ENCODE measurements at regions of chr11 and their contacts with region 1.

Region 1: DNA sequence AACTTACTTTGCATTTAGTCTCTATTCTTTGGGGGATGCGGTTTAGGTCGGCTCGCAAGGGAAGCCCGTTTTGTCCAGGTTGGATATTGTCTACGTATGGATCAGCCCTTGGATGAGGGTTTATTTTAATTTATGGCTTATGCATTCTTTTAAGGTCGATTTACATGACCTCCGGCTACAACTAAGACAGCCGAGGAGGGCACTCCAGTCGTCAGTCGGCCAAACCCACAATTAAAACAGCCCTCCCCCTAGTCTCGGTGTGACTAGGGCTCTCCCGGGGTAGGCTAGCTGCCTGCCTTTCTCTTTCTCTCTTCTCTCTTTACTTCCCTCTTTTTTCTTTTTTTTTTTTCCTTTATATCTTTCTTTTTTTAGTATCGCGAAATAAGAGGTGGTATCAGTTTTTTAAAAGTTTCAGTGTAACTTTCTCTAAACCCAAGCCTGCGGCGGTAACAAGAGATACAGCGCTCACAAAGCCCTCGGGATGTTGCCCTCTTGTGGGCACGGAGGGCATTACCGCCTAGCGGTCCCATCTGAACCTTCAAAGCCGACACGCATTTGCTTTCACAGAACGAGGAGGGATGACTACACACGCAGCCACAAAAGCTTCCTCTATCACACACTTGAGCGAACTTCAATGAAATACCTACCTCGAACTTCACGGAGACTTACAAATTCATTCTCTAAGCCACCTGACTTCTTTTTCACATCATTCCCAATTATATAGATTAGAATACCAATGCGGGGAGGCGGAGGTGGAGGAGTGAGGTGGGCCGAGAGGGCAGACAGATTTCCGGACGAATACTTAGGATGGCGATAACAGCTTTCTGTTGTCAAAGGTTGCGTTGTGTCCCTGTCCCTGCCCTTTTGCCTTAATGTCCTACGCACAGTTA is 132.3 kb upstream of the C11orf58 start:
- DNase-seq: peak; percentile 91
- H3K4me3 Mint-ChIP-seq: peak overlapping the region; percentile 75
- H3K27ac Mint-ChIP-seq: no peak overlapping the region
- H3K4me1 Mint-ChIP-seq: peaks cover 23% of the 10 kb centered on the region
- H3K27me3 Mint-ChIP-seq: peaks cover 45% of the 10 kb centered on the region

Region 2: GRCh38 chr11:15650105-15650938 is 955.8 kb before region 1 on chr11:
- CTCF ChIA-PET with region 1: interaction called, 6 read pairs
- POLR2A ChIA-PET with region 1: no interaction called
- intact Hi-C with region 1: loop called (anchors 1 kb)
- DNase-seq: peak; percentile 82
- H3K4me3 Mint-ChIP-seq: no peak overlapping the region
- H3K27ac Mint-ChIP-seq: no peak overlapping the region
- H3K4me1 Mint-ChIP-seq: peaks cover 3% of the 10 kb centered on the region
- H3K27me3 Mint-ChIP-seq: peaks cover 17% of the 10 kb centered on the region

Region 3: DNA sequence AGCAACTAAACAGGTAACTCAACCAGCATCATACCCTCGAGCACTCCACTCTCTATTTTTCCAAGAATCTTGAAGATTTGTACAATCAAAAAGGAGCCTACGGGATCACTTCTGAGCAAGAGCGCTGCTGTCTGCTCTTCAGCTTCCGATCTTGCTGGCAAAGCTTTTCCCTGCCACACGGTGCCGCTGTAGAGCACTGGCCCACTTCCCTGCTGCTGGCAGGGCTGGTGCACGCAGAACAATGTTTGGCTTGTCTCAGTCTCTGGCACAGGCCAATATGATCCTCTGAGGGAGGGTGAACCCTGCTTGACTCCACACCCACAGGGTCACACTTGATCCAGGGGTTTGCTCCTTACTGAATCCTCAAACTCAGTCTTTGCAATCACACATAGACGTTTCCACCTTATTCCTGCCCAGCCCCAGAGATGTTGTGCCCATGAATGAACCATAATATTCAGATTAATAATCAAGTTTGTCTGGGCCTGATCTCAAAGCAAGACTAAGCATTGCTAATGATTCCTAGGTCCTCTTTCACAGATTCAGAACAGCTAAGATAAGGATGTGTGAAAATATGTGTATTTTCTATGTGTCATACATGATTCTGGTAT is 786.4 kb before region 1 on chr11:
- CTCF ChIA-PET with region 1: no interaction called
- POLR2A ChIA-PET with region 1: no interaction called
- intact Hi-C with region 1: loop called (anchors 5 kb)
- DNase-seq: peak; percentile 60
- H3K4me3 Mint-ChIP-seq: no peak overlapping the region
- H3K27ac Mint-ChIP-seq: no peak overlapping the region
- H3K4me1 Mint-ChIP-seq: peaks cover 16% of the 10 kb centered on the region
- H3K27me3 Mint-ChIP-seq: peaks cover 2% of the 10 kb centered on the region

Region 4: GRCh38 chr11:15941201-15941770 is 664.9 kb before region 1 on chr11:
- CTCF ChIA-PET with region 1: interaction called, 3 read pairs
- POLR2A ChIA-PET with region 1: no interaction called
- intact Hi-C with region 1: loop called (anchors 2 kb)
- DNase-seq: peak; percentile 25
- H3K4me3 Mint-ChIP-seq: no peak overlapping the region
- H3K27ac Mint-ChIP-seq: no peak overlapping the region
- H3K4me1 Mint-ChIP-seq: no peaks in the 10 kb centered on the region
- H3K27me3 Mint-ChIP-seq: peaks cover 4% of the 10 kb centered on the region

Region 5: GRCh38 chr11:16402654-16403447 is 203.3 kb before region 1 on chr11:
- CTCF ChIA-PET with region 1: no interaction called
- POLR2A ChIA-PET with region 1: no interaction called
- intact Hi-C with region 1: no loop called
- DNase-seq: no peak
- H3K4me3 Mint-ChIP-seq: no peak overlapping the region
- H3K27ac Mint-ChIP-seq: no peak overlapping the region
- H3K4me1 Mint-ChIP-seq: no peaks in the 10 kb centered on the region
- H3K27me3 Mint-ChIP-seq: no peaks in the 10 kb centered on the region

Region 6: GRCh38 chr11:16511116-16512114 is 94.7 kb before region 1 on chr11:
- CTCF ChIA-PET with region 1: no interaction called
- POLR2A ChIA-PET with region 1: no interaction called
- intact Hi-C with region 1: loop called (anchors 5 kb)
- DNase-seq: no peak
- H3K4me3 Mint-ChIP-seq: no peak overlapping the region
- H3K27ac Mint-ChIP-seq: no peak overlapping the region
- H3K4me1 Mint-ChIP-seq: peaks cover 2% of the 10 kb centered on the region
- H3K27me3 Mint-ChIP-seq: no peaks in the 10 kb centered on the region

Region 7: GRCh38 chr11:16738193-16738946 is 132.2 kb after region 1 on chr11 and contains the start of gene C11orf58:
- CTCF ChIA-PET with region 1: no interaction called
- POLR2A ChIA-PET with region 1: interaction called, 3 read pairs
- intact Hi-C with region 1: loop called (anchors 1 kb)
- DNase-seq: peak; percentile 97
- H3K4me3 Mint-ChIP-seq: no peak within 1 kb of the TSS
- H3K27ac Mint-ChIP-seq: no peak within 1 kb of the TSS
- H3K4me1 Mint-ChIP-seq: peaks cover 22% of the 10 kb centered on the region
- H3K27me3 Mint-ChIP-seq: no peaks in the 10 kb centered on the region
- total RNA-seq, gene C11orf58: 132 to 134 TPM

Region 8: DNA sequence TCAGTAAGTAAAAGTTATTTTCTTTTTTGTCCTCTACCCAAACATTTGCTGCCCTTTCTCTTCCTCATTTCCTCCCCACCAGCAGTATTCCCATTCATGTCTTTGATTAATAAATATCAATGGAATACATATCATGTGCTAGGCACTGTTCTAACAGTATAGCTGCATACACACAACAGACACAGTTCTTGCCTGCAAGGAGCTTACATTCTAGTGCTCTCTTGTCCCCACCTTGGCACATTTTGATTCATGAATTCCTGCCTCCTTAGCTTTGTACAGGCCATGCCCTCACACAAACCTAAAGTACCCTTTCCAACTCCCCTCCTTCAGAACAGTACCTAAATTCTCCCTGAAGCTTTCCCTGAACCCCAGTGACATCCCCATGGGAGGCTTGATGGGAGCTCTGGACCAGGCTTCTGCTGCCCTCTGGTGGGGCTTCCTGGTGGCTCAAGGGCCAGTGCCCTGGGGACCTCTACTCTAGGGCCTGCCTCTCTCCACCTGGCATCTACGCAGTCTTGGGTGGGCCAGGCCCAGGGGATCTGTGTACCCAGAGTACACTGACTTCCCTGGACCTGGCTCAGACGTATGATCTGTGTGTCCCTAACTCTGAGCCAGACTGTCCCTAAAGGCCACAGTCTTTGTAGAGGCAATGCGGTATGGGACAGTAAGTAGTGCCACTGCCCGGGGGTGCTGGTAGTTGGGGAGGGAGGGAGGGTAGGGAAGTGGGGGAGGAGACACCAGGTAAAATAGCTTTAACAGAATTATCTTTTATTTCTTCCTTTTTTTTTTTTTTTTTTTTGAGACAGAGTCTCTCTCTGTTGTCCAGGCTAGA is 457.2 kb after region 1 on chr11:
- CTCF ChIA-PET with region 1: no interaction called
- POLR2A ChIA-PET with region 1: no interaction called
- intact Hi-C with region 1: loop called (anchors 5 kb)
- DNase-seq: peak; percentile 73
- H3K4me3 Mint-ChIP-seq: no peak overlapping the region
- H3K27ac Mint-ChIP-seq: no peak overlapping the region
- H3K4me1 Mint-ChIP-seq: no peaks in the 10 kb centered on the region
- H3K27me3 Mint-ChIP-seq: no peaks in the 10 kb centered on the region

Measured in activated CD4-positive, alpha-beta memory T cell treated with anti-CD3 and anti-CD28 coated beads for 36 hours (primary cell).